ENCODE measurements at regions of chr6 and their contacts with region 1.

Region 1: DNA sequence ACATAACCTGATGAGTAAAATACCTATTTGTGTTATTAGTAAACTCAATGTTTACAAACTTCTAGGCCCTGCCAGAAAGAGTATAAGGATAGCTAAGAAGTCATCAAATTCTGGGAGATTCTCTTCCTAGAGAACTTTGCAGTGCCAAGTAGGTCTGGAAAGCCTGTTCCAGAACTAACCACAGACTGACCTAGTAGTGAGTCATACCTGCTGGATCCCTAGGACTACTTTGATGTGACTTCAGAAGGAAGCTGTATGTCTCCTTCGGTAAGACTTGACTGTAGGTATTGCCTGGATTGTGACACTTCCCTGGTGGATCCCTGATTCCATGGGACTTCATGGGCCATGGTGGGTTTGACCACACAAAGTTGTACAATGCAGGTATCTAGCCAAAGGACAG is 131.7 kb downstream of the DNAH8 start:
- DNase-seq: peak; percentile 79
- H3K4me3 ChIP-seq: no peak overlapping the region
- H3K27ac ChIP-seq: no peak overlapping the region
- H3K4me1 ChIP-seq: peaks cover 9% of the 10 kb centered on the region
- H3K27me3 ChIP-seq: peaks cover 7% of the 10 kb centered on the region
- CTCF ChIP-seq: no peak

Region 2: DNA sequence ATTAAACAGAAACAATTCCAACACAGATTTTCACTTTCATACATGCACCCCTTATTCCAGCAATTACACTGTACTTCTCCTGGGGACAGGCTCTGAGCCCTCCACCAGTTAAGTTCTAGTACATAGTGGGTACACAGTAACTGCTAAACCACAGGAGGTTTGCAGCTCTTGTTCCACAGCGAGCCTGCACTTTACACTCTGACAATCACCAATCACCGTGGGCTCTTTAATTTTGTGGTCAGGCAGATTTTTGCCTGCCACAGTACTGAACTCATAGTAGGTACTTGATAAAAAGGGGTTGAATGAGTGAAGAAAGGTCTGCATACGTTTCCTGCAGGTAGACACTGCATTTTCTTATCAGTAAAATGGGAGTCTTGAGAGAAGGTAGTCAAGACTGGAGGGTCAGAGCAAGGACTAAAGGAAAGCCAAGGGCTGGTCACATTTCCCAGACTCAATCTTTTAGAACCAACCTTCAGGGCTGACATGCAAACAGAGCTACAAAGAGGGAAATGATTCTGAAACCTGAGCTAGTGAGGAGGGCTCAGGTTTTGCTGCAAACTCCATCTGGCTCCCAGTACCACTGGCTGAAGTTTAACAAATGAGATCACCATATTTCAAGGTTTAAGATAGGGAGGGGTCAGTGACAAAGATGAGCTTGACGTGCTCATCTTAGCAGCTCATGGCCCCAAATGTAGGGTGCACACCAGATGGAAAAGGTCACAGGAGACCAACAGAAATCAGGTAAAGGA is 611.7 kb before region 1 on chr6:
- CTCF ChIA-PET with region 1: no interaction called
- dilution Hi-C with region 1: no loop called
- in situ Hi-C with region 1: no loop called
- intact Hi-C with region 1: no loop called
- DNase-seq: no peak
- H3K4me3 ChIP-seq: no peak overlapping the region
- H3K27ac ChIP-seq: no peak overlapping the region
- H3K4me1 ChIP-seq: no peaks in the 10 kb centered on the region
- H3K27me3 ChIP-seq: no peaks in the 10 kb centered on the region
- CTCF ChIP-seq: no peak

Region 3: GRCh38 chr6:38797391-38797790 is 49.5 kb before region 1 on chr6:
- CTCF ChIA-PET with region 1: no interaction called
- dilution Hi-C with region 1: loop called (anchors 5 kb)
- in situ Hi-C with region 1: no loop called
- intact Hi-C with region 1: no loop called
- DNase-seq: no peak
- H3K4me3 ChIP-seq: no peak overlapping the region
- H3K27ac ChIP-seq: no peak overlapping the region
- H3K4me1 ChIP-seq: peaks cover 19% of the 10 kb centered on the region
- H3K27me3 ChIP-seq: no peaks in the 10 kb centered on the region
- CTCF ChIP-seq: no peak